ENCODE measurements at regions of chr7 and their contacts with region 1.

Region 1: DNA sequence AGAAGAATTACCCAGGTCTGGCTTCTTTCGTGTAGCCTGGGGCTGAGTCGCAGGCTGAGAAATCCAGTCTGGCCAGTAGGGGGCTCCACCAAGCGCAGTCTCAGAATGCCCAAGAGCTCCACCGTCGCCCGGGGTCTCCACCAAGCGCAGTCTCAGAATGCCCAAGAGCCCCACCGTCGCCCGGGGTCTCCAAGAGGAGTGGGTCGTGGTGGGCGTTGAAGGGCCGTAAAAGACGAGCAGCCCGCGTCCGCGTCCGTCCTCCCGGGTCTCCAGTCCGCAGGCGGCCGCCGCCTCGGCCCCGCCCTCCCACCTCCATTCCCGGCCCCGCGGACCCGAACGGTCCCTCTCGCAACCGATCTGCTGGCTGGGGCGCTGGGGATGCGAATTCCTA is 895 bp upstream of the ZYX start:
- DNase-seq: peak; percentile 83 to 88 (median 84)
- H3K4me3 ChIP-seq: peak overlapping the region; percentile 72 to 97
- H3K4me3 Mint-ChIP-seq: peak overlapping the region; percentile 91 to 95 (median 92)
- H3K27ac ChIP-seq: peak overlapping the region; percentile 91
- H3K27ac Mint-ChIP-seq: peak overlapping the region; percentile 92 to 99 (median 96)
- H3K4me1 ChIP-seq: peaks cover 70% of the 10 kb centered on the region
- H3K4me1 Mint-ChIP-seq: peaks cover 38 to 48% (median 44%) of the 10 kb centered on the region in 4 donors
- H3K27me3 ChIP-seq: no peaks in the 10 kb centered on the region
- H3K27me3 Mint-ChIP-seq: no peaks in the 10 kb centered on the region

Region 2: DNA sequence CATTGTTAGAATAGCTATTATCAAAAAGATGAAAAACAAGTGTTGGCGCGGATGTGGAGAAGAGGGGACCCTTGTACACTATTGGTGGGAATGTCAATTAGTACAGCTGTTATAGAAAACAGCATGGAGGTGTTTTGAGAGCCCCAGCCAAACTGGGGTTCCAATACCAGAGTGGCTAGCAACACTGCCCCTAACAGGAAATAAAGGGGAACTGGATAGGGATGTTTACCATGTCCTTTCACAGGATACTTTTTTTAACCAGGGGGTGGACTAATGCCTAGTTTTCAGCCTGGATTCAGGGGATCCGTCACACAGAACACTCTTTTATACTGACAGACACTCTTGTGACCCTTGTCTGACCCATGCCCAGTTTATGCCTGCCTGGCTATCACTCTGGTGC is 123.9 kb before region 1 on chr7:
- CTCF ChIA-PET with region 1: interaction called, 8 read pairs
- POLR2A ChIA-PET with region 1: interaction called, 12 read pairs
- intact Hi-C with region 1: loop called (anchors 2 kb)
- DNase-seq: no peak
- H3K4me3 ChIP-seq: no peak overlapping the region
- H3K4me3 Mint-ChIP-seq: peak overlapping the region in 3 of 8 donors; percentile 50 to 61 (median 55)
- H3K27ac ChIP-seq: no peak overlapping the region
- H3K27ac Mint-ChIP-seq: peak overlapping the region; percentile 4 to 91 (median 66)
- H3K4me1 ChIP-seq: peaks cover 84% of the 10 kb centered on the region
- H3K4me1 Mint-ChIP-seq: peaks cover 60 to 91% (median 73%) of the 10 kb centered on the region in 4 donors
- H3K27me3 ChIP-seq: no peaks in the 10 kb centered on the region
- H3K27me3 Mint-ChIP-seq: no peaks in the 10 kb centered on the region

Region 3: DNA sequence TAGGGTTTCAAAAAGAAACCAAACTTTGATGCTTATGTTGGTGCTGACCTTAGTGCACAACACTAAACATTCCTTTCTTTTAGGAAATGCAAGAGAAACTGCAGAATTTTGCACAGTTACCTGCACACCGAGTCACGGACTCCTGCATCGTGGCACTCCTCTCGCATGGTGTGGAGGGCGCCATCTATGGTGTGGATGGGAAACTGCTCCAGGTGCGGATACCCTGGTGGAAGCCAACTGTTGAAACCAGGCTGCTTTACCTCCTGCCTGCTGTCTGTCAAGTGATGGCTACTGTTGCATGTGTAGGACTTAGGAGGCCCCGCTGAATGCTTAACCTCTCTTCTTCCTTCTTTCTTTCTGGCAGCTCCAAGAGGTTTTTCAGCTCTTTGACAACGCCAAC is 80.4 kb before region 1 on chr7:
- CTCF ChIA-PET with region 1: interaction called, 10 read pairs
- POLR2A ChIA-PET with region 1: interaction called, 4 read pairs
- intact Hi-C with region 1: no loop called
- DNase-seq: peak; percentile 61 to 70 (median 68)
- H3K4me3 ChIP-seq: no peak overlapping the region
- H3K4me3 Mint-ChIP-seq: peak overlapping the region in 5 of 8 donors; percentile 26 to 50 (median 30)
- H3K27ac ChIP-seq: no peak overlapping the region
- H3K27ac Mint-ChIP-seq: peak overlapping the region; percentile 14 to 78 (median 56)
- H3K4me1 ChIP-seq: peaks cover 31% of the 10 kb centered on the region
- H3K4me1 Mint-ChIP-seq: peaks cover 32 to 44% (median 39%) of the 10 kb centered on the region in 4 donors
- H3K27me3 ChIP-seq: no peaks in the 10 kb centered on the region
- H3K27me3 Mint-ChIP-seq: no peaks in the 10 kb centered on the region

Region 4: DNA sequence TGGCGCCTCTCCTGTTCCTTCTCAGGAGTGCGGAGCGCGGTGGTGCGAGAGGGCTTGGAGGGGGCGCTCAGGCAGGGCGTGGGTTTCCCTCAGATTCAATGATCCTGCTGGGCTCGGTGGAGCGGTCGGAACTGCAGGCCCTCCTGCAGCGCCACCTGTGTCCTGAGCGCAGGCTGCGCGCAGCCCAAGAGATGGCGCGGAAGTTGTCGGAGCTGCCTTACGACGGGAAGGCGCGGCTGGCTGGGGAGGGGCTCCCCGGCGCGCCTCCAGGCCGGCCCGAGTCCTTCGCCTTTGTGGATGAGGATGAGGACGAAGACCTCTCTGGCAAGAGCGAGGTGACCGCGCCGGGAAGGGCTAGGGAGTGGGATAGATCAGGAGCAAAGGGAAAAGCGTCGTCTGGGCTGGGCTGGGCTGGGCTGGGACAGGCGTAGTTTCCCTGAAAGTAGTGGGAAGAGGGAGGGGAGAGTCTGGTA is 34.8 kb before region 1 on chr7:
- CTCF ChIA-PET with region 1: interaction called, 15 read pairs
- POLR2A ChIA-PET with region 1: interaction called, 10 read pairs
- intact Hi-C with region 1: no loop called
- DNase-seq: peak; percentile 52 to 64 (median 58)
- H3K4me3 ChIP-seq: no peak overlapping the region
- H3K4me3 Mint-ChIP-seq: peak overlapping the region; percentile 74 to 87 (median 80)
- H3K27ac ChIP-seq: no peak overlapping the region
- H3K27ac Mint-ChIP-seq: peak overlapping the region in 4 of 7 donors; percentile 55 to 70 (median 68)
- H3K4me1 ChIP-seq: peaks cover 4% of the 10 kb centered on the region
- H3K4me1 Mint-ChIP-seq: peaks cover 5 to 9% (median 7%) of the 10 kb centered on the region in 4 donors
- H3K27me3 ChIP-seq: no peaks in the 10 kb centered on the region
- H3K27me3 Mint-ChIP-seq: peaks cover 0 to 6% of the 10 kb centered on the region in 2 donors

Region 5: GRCh38 chr7:143391462-143392404 is 11.5 kb after region 1 on chr7:
- CTCF ChIA-PET with region 1: interaction called, 11 read pairs
- POLR2A ChIA-PET with region 1: interaction called, 42 read pairs
- intact Hi-C with region 1: loop called (anchors 2 kb)
- DNase-seq: no peak
- H3K4me3 ChIP-seq: no peak overlapping the region
- H3K4me3 Mint-ChIP-seq: no peak overlapping the region
- H3K27ac ChIP-seq: no peak overlapping the region
- H3K27ac Mint-ChIP-seq: no peak overlapping the region
- H3K4me1 ChIP-seq: peaks cover 7% of the 10 kb centered on the region
- H3K4me1 Mint-ChIP-seq: peaks cover 7 to 21% (median 12%) of the 10 kb centered on the region in 4 donors
- H3K27me3 ChIP-seq: no peaks in the 10 kb centered on the region
- H3K27me3 Mint-ChIP-seq: no peaks in the 10 kb centered on the region

Region 6: DNA sequence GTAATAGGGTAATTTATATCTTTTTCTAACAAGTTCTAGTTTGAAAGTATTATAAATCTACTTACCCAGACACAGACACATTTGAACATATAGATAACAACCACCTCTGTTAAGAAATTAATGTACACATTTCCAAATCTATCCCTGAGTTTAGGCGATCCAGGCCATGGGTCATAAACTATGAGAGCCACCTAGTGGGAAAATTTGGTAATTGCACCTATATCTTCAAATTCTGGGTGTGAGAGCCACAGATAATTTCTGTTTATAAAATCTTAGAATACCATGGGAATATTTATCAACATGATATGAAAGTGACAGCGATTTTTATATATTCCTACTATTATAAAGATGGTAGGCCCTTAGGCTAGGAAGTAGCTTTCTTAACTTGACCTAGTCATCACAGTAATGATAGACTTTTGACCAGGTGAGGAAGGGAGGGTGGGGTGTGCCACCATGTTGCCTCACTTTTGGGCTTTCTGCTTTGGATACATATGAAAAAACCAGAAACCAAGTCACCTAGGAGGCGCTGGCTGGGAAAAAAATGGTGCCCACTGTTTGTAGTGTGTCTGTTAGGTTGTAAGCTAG is 36.4 kb after region 1 on chr7:
- CTCF ChIA-PET with region 1: interaction called, 40 read pairs
- POLR2A ChIA-PET with region 1: interaction called, 10 read pairs
- intact Hi-C with region 1: loop called (anchors 2 kb)
- DNase-seq: peak in 4 of 5 donors; percentile 47 to 62 (median 53)
- H3K4me3 ChIP-seq: no peak overlapping the region
- H3K4me3 Mint-ChIP-seq: no peak overlapping the region
- H3K27ac ChIP-seq: no peak overlapping the region
- H3K27ac Mint-ChIP-seq: no peak overlapping the region
- H3K4me1 ChIP-seq: no peaks in the 10 kb centered on the region
- H3K4me1 Mint-ChIP-seq: peaks cover 0 to 9% (median 8%) of the 10 kb centered on the region in 4 donors
- H3K27me3 ChIP-seq: no peaks in the 10 kb centered on the region
- H3K27me3 Mint-ChIP-seq: no peaks in the 10 kb centered on the region